ENCODE measurements at regions of chr19 and their contacts with region 1.

Region 1: GRCh38 chr19:37403403-37403802 is 32.5 kb downstream of the ZNF527 start:
- DNase-seq: no peak
- H3K4me3 ChIP-seq: no peak overlapping the region
- H3K27ac ChIP-seq: no peak overlapping the region
- H3K4me1 ChIP-seq: no peaks in the 10 kb centered on the region
- H3K27me3 ChIP-seq: no peaks in the 10 kb centered on the region
- CTCF ChIP-seq: no peak

Region 2: DNA sequence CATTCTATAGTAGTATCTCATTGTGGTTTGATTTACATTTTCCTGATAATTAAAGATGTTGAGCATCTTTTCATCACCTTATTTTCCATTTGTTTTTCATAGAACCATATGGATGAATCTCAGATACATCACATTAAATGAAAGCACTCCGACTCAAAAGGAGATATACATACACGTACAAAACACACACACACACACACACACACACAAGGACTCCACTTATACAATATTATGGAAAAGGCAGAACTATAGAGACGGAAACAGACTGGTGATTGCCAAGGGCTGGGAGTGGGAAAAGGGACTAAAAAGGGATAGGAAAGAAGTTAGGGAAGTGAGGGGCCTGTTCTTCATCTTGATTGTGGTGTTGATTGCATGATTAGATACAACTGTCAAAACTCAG is 255.2 kb before region 1 on chr19:
- intact Hi-C with region 1: no loop called
- DNase-seq: no peak
- H3K4me3 ChIP-seq: no peak overlapping the region
- H3K27ac ChIP-seq: no peak overlapping the region
- H3K4me1 ChIP-seq: no peaks in the 10 kb centered on the region
- H3K27me3 ChIP-seq: no peaks in the 10 kb centered on the region
- CTCF ChIP-seq: no peak

Region 3: GRCh38 chr19:37452500-37453245 is 49.3 kb after region 1 on chr19:
- intact Hi-C with region 1: loop called (anchors 10 kb)
- DNase-seq: no peak
- H3K4me3 ChIP-seq: no peak overlapping the region
- H3K27ac ChIP-seq: no peak overlapping the region
- H3K4me1 ChIP-seq: no peaks in the 10 kb centered on the region
- H3K27me3 ChIP-seq: no peaks in the 10 kb centered on the region
- CTCF ChIP-seq: no peak